ENCODE measurements at regions of chr7 and their contacts with region 1.

Region 1: DNA sequence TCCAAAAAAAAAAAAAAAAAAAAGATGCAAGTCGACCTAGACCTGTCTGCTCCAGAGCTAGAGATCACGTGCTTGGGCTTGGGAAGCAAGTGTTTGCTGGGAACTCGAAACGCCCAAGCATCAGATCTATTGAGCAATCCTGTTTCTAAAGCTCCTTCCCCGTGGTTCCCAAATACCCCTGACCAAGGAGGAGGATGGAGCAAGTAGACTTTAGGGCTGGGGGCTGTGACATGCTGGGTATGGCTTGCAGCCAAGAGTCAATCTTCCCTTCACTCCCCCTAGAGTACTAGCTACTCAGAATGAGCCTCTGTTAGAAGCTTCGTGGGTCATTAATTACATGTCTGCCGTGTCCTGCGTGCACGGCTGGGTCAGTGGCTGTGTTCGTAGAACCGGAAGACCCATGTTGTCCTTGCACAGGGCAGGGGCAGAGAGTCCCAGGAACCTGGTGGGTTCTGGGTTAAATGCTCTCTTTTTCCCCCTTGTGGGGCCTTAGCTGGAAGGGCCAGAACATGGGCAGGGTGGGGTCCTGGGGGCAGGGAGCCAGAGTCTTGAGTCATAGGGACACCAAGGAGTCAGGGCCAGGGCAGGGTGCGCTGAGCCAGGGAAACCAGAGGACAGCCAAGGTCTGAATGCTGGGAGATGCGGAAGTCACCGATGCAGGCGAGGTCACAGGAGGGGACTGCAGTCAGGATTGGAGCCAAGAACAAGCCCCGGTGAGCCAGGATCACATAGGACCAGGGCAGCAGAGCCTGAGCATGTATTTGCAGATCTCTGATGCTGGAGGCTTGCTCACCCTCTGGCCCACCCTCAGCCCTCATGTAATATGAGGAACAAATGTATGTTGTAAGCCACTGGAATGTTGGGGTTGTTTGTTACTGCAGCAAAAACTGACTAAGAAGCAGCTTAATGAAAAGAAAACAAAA is 34.6 kb upstream of the TPST1 start:
- DNase-seq: peak; percentile 72
- ATAC-seq: peak; percentile 93

Region 2: DNA sequence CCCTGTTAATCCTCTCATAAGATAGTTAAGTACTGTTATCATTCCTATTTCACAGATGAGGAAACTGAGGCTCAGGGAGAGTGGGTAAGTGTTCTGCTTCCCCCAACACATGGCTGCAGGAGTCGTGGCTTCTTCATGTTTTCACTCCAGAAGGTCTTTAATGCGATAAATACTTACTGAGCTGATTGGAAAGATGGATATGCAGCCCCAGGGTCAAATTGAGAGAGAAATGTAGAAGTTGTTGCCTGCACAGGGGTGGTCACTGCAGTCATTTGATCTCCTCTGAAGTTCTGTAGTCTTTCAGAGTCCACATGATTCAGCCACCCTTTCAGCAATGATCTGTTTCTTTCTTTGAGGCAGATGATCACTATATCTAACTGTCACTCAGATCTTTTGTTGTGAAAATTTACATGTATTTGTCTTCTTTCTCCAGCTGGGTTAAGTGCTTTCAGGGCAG is 26.7 kb before region 1 on chr7:
- intact Hi-C with region 1: loop called (anchors 1 kb)
- DNase-seq: no peak
- ATAC-seq: no peak

Measured in sciatic nerve (tissue), 2 donors.